ENCODE measurements at regions of chr16 and their contacts with region 1.

Region 1: DNA sequence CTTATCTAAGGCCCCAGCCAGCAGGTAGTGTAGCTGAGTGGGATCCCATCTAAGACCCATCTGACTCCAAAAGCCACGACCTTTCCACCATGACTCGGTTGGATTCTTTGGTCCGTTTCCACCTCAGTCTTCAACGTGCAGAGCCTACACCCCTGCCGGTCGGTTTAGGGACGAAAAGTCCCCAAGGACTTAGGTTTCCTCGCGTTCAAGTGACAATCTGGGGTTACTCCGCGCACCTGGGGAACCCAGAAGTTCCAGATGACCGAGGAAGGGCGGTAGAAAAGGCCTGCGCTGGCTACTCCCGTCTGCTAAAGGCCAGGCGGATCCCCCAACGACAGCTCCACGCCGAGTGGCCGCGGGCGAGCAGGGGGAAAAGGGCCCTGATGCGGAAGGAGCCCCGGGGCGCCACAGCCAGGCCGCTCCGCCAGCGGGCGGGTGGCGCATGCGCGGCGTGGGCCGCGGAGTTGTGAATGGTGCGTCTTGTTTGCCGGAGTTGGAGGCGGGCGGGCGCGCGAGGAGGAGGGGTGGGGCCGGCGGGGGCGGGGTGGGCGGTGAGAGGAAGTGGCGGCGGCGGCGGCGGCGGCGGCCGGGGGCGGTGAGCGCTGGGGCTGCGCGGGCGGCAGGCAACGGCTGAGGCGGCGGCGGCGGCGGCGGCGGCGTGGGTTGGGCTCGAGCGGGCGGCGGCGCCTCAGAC is at the start of gene CBFB:
- DNase-seq: peak in 1 of 2 experiments; percentile 91
- H3K4me3 ChIP-seq: peak within 1 kb of the TSS; percentile 54 to 88 (median 84)
- H3K27ac ChIP-seq: no peak within 1 kb of the TSS; the same call in 1 of the 2 replicates
- H3K4me1 ChIP-seq: peaks cover 0 to 4% (median 1%) of the 10 kb centered on the region in 4 experiments; a peak in 2 of 7 replicates
- H3K27me3 ChIP-seq: peaks cover 0 to 7% (median 3%) of the 10 kb centered on the region in 4 experiments; a peak in 2 of 7 replicates
- CTCF ChIP-seq: peak in 2 of 3 experiments; percentile 8 to 12; a peak in 1 of 4 replicates
- EP300 ChIP-seq: no peak
- POLR2A ChIP-seq: peak in 1 of 2 experiments; percentile 35; a peak in 1 of 3 replicates
- RAD21 ChIP-seq: no peak
- total RNA-seq, gene CBFB: 31.6 and 34.3 TPM in 2 replicates

Region 2: DNA sequence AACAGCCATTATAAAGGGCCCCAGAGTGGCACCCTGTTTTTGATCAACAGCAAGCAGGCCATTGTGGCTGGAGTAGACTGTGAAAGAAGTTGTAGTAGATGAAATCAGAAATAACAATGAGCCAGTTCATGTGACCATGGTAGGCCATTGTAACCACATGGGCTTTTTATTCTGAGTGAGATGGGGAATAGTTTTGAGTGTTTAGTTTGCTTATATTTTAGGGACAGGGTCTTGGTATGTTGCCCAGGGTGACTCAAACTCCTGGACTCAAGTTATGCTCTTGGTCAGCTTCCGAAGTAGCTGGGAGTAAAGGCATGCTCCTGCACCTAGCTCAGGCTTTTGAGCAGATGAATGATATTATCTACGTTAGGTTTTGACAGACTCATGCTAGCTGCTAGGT is 12.2 kb after region 1 on chr16:
- CTCF ChIA-PET with region 1: interaction called, 13 read pairs
- POLR2A ChIA-PET with region 1: interaction called, 4 read pairs
- DNase-seq: no peak
- H3K4me3 ChIP-seq: no peak overlapping the region
- H3K27ac ChIP-seq: no peak overlapping the region
- H3K4me1 ChIP-seq: no peaks in the 10 kb centered on the region; a peak in 1 of 7 replicates
- H3K27me3 ChIP-seq: no peaks in the 10 kb centered on the region
- CTCF ChIP-seq: no peak
- EP300 ChIP-seq: no peak
- POLR2A ChIP-seq: no peak
- RAD21 ChIP-seq: no peak

Measured in H1 (cell line).